ENCODE measurements at regions of chr15 and their contacts with region 1.

Region 1: DNA sequence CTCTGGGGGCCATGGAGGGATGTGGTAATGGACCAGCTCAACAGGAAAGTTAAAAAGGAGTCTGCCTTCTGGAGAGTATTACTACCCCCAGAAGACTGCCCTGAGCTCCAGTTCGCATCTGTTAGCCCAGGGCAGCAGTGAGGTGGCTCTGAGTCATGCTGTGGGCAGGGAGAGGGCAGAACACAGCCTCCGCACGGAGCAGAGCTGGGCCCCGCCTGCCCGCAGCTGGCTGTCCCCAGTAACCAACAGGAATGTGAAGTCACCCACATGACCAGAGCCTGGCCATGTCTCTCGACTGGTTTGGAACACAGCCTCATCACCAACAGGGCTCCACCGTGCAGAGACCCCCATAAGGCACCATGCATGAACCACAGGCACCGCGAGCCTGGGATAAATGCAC is 62.1 kb downstream of the CYFIP1 start:
- DNase-seq: no peak

Region 2: DNA sequence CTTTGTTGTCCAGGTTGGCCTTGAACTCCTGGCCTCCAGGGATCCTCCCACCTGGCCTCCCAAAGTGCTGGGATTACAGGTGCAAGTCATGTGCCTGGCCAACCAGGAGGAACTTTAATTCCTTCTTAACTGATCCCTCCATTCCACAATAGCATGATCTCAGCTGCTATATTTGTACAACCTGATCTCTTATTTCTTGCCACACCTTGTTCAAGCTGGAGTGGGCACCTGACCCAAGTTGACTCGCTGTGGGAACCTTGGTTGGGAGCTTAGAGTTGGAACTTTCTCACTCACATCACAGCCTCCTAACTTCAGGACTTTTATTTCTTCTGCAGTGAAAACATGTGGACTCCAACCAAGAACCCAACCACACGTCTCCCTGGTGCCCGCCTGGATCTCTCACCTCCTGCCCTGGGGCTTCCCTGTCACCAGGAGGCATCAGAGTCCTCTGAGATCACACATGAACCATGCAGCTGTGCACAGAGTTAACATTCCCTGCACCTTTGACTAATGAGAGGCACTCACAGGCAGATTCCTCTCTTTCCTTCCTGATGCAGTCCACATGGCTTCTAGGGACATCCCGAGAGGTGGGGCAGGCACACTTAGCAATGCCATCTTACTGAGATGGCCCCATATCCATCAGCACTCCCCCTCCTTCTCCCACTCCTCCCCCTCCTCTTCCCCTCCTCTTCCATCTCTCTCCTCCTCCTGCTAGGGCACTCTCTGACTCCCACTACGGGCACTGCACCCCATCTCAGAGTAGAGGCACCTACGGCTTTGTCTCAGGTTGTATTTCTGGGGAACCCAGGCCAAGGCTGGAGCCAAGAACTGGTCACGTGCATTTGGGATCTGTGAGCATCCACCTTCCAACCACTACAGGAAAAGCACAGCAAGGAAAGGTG is 71.8 kb after region 1 on chr15:
- in situ Hi-C with region 1: no loop called
- DNase-seq: no peak

Region 3: DNA sequence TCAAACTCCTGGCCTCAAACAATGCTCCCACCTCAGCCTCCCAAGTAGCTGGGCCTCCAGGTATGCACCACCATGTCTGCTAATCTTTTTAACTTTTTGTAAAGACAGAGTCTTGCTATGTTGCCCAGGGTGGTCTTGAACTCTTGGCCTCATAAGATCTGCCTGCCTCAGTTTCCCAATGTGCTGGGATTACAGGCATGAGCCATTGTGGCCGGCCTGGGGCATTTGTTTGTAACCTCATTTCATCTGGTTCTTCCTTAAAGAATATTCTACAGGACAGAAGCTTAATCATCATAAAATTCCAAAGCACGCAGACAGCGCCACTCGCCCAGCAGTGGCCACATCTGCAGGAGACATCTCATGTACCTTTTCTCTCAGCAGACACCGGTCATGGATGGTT is 85.7 kb after region 1 on chr15:
- in situ Hi-C with region 1: loop called (anchors 25 kb)
- DNase-seq: no peak

Region 4: DNA sequence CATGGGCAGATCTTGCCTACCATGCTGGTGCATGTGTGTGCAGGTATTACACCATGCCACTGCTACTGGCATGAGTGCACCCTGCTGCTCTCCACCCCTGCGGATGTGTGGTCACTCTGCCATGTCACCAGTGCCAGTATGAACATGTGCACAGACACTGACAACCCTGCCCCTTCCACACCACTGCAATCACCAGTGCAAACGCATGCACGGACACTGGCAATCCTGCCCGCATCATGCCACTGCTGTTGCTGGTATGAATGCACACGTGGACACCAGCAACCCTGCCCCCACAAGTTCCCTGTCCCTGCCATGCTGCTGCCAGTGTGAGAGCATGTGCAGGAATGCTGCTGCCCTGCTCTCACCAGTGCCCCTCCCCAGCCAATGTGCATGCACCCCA is 146.1 kb after region 1 on chr15:
- in situ Hi-C with region 1: no loop called
- DNase-seq: no peak

Region 5: GRCh38 chr15:23118203-23118602 is 200.1 kb after region 1 on chr15:
- in situ Hi-C with region 1: loop called (anchors 25 kb)
- DNase-seq: no peak

Region 6: GRCh38 chr15:23422946-23423708 is 505.1 kb after region 1 on chr15:
- in situ Hi-C with region 1: loop called (anchors 25 kb)
- DNase-seq: no peak